AG04449 (cell line): ENCODE measurements at regions of chr15 and their contacts with region 1.

Region 1: GRCh38 chr15:33700695-33701304 is 267.5 kb upstream of the CHRM5 start:
- DNase-seq: peak; percentile 23
- H3K4me3 ChIP-seq: no peak overlapping the region
- CTCF ChIP-seq: peak; percentile 95

Region 2: DNA sequence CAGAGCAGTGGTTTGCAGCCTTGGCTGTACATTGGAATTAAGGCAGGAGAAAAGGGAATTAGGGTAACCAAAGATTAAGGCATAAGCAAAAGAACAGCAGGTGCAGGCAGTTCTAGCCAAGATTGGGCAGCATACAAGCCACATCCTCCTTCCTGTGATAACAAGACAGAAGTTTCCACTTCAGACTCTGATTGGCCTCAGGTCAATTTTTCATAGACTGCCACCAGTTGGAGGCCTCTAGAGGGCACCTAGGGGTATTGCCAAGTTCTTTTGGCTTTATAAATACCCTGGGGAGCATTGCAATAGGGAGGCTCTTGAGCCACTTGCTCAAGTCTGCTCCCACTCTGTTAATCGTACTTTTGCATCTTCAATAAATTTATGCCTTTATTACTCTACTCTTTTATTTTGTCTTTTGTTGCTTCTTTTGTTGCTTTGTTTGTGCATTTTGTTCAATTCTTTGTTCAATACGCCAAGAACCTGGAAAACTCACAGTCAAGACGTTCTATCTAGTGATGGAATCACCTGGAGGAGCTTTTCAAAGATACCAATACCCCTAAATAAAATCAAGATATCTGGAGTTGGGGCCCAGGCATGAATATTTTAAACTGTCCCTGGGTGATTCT is 474.1 kb before region 1 on chr15:
- CTCF ChIA-PET with region 1: interaction called, 30 read pairs
- POLR2A ChIA-PET with region 1: no interaction called
- DNase-seq: no peak
- H3K4me3 ChIP-seq: no peak overlapping the region
- CTCF ChIP-seq: no peak

Region 3: GRCh38 chr15:33234014-33234461 is 466.8 kb before region 1 on chr15:
- CTCF ChIA-PET with region 1: interaction called, 54 read pairs
- POLR2A ChIA-PET with region 1: no interaction called
- DNase-seq: no peak
- H3K4me3 ChIP-seq: no peak overlapping the region
- CTCF ChIP-seq: peak; percentile 44

Region 4: DNA sequence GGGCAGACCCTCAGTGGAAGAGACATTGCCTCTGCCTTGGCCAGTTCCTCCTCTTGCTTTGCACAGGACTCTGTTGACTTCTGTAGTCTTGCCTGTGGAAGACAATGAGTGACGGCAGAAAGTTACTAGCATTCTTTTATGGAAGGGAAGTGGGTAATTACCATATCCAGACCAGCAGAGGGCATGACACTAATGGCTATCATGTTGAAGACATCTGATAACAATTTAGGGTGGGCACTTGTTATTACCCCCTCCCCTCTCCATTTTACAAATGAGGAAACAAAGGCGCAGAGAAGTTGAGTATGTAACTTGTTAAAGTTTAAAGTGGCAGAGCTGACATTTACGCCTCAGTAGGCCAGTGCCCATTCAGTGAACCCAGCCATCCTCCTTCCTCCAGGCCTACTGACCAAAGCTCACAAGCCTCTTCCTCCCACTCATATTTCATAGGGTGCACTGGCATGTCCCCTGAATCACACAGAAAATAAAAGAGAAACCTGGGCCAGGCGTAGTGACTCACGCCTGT is 458.1 kb before region 1 on chr15:
- CTCF ChIA-PET with region 1: interaction called, 54 read pairs
- POLR2A ChIA-PET with region 1: no interaction called
- DNase-seq: no peak
- H3K4me3 ChIP-seq: no peak overlapping the region
- CTCF ChIP-seq: peak; percentile 23

Region 5: GRCh38 chr15:33292717-33293307 is 408.0 kb before region 1 on chr15:
- CTCF ChIA-PET with region 1: interaction called, 92 read pairs
- POLR2A ChIA-PET with region 1: no interaction called
- DNase-seq: no peak
- H3K4me3 ChIP-seq: no peak overlapping the region
- CTCF ChIP-seq: peak; percentile 62

Region 6: GRCh38 chr15:33716025-33716424 is 15.2 kb after region 1 on chr15:
- CTCF ChIA-PET with region 1: interaction called, 27 read pairs
- POLR2A ChIA-PET with region 1: no interaction called
- DNase-seq: no peak
- H3K4me3 ChIP-seq: no peak overlapping the region
- CTCF ChIP-seq: no peak

Region 7: DNA sequence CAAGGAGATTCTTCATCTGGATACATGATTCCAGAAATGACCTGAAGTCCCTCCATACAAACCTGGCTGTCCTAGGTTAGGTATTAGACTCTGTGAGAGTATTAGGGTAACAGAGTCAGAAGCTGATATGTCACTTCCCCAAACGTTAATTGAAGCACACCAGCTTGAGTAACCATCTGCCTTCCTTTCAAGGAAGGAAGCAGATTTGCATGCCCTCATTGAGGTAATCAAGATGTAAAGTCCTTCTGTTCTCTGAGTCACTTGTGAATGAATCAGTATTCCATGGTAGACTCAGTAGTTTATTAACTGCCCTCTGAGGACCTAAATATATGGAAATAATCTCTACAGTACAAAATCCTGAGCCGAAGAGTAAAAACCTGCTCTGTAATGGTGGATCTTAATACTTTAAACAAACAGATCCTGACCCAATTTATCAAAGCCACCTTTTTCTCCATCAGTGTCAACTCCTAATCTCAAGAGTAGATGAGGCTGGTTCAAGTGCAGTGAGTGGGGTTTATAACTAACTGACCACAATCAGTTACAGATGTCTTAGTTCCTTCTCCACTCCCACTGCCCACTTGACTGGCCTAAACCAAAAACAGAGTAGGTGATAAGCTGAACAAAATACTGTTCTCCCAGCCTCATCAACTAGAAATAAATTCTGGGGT is 21.3 kb after region 1 on chr15:
- CTCF ChIA-PET with region 1: interaction called, 21 read pairs
- POLR2A ChIA-PET with region 1: no interaction called
- DNase-seq: no peak
- H3K4me3 ChIP-seq: no peak overlapping the region
- CTCF ChIP-seq: no peak